ENCODE measurements at regions of chr18 and their contacts with region 1.

Region 1: GRCh38 chr18:55275039-55275901 is 312.7 kb downstream of the TCF4 start:
- DNase-seq: no peak
- ATAC-seq: peak; percentile 81
- H3K4me3 ChIP-seq: no peak overlapping the region
- H3K27ac ChIP-seq: no peak overlapping the region
- H3K4me1 ChIP-seq: peaks cover 7% of the 10 kb centered on the region; the same call in 1 of the 2 replicates
- H3K27me3 ChIP-seq: no peaks in the 10 kb centered on the region
- CTCF ChIP-seq: peak; percentile 4 to 25 (median 22); a peak in 3 of 6 replicates
- EP300 ChIP-seq: no peak
- POLR2A ChIP-seq: no peak
- RAD21 ChIP-seq: peak; percentile 49

Region 2: GRCh38 chr18:54717673-54718407 is 557.4 kb before region 1 on chr18:
- CTCF ChIA-PET with region 1: no interaction called
- POLR2A ChIA-PET with region 1: no interaction called
- RAD21 ChIA-PET with region 1: no interaction called
- SMC1A ChIA-PET with region 1: no interaction called
- in situ Hi-C with region 1: no loop called
- intact Hi-C with region 1: no loop called
- DNase-seq: peak; percentile 16
- ATAC-seq: peak; percentile 93
- H3K4me3 ChIP-seq: no peak overlapping the region
- H3K27ac ChIP-seq: no peak overlapping the region
- H3K4me1 ChIP-seq: peaks cover 9% of the 10 kb centered on the region
- H3K27me3 ChIP-seq: no peaks in the 10 kb centered on the region
- CTCF ChIP-seq: no peak
- EP300 ChIP-seq: no peak
- POLR2A ChIP-seq: no peak
- RAD21 ChIP-seq: no peak

Region 3: GRCh38 chr18:55228191-55228590 is 47.1 kb before region 1 on chr18:
- CTCF ChIA-PET with region 1: interaction called, 153 read pairs
- POLR2A ChIA-PET with region 1: no interaction called
- RAD21 ChIA-PET with region 1: no interaction called
- SMC1A ChIA-PET with region 1: interaction called, 55 read pairs
- in situ Hi-C with region 1: no loop called
- intact Hi-C with region 1: no loop called
- DNase-seq: no peak
- ATAC-seq: no peak
- H3K4me3 ChIP-seq: no peak overlapping the region
- H3K27ac ChIP-seq: no peak overlapping the region
- H3K4me1 ChIP-seq: no peaks in the 10 kb centered on the region
- H3K27me3 ChIP-seq: no peaks in the 10 kb centered on the region
- CTCF ChIP-seq: no peak
- EP300 ChIP-seq: no peak
- POLR2A ChIP-seq: no peak
- RAD21 ChIP-seq: no peak

Region 4: GRCh38 chr18:55243857-55244256 is 31.4 kb before region 1 on chr18:
- CTCF ChIA-PET with region 1: interaction called, 153 read pairs
- POLR2A ChIA-PET with region 1: interaction called, 70 read pairs
- RAD21 ChIA-PET with region 1: interaction called, 93 read pairs
- SMC1A ChIA-PET with region 1: interaction called, 177 read pairs
- in situ Hi-C with region 1: no loop called
- intact Hi-C with region 1: no loop called
- DNase-seq: no peak
- ATAC-seq: no peak
- H3K4me3 ChIP-seq: no peak overlapping the region
- H3K27ac ChIP-seq: no peak overlapping the region
- H3K4me1 ChIP-seq: peaks cover 44% of the 10 kb centered on the region
- H3K27me3 ChIP-seq: no peaks in the 10 kb centered on the region
- CTCF ChIP-seq: no peak
- EP300 ChIP-seq: no peak
- POLR2A ChIP-seq: no peak
- RAD21 ChIP-seq: no peak